Activated B cell treated with CpG ODN at 0.5 μM for 24 hours (primary cell): ENCODE measurements at regions of chr22 and their contacts with region 1.

Region 1: GRCh38 chr22:16917144-16918003 is 90.6 kb downstream of the GAB4 start:
- DNase-seq: peak; percentile 49
- ATAC-seq: peak; percentile 42
- H3K4me3 Mint-ChIP-seq: no peak overlapping the region
- H3K27ac Mint-ChIP-seq: no peak overlapping the region
- H3K4me1 Mint-ChIP-seq: peaks cover 28% of the 10 kb centered on the region
- H3K27me3 Mint-ChIP-seq: peaks cover 17% of the 10 kb centered on the region
- CTCF ChIP-seq: no peak

Region 2: DNA sequence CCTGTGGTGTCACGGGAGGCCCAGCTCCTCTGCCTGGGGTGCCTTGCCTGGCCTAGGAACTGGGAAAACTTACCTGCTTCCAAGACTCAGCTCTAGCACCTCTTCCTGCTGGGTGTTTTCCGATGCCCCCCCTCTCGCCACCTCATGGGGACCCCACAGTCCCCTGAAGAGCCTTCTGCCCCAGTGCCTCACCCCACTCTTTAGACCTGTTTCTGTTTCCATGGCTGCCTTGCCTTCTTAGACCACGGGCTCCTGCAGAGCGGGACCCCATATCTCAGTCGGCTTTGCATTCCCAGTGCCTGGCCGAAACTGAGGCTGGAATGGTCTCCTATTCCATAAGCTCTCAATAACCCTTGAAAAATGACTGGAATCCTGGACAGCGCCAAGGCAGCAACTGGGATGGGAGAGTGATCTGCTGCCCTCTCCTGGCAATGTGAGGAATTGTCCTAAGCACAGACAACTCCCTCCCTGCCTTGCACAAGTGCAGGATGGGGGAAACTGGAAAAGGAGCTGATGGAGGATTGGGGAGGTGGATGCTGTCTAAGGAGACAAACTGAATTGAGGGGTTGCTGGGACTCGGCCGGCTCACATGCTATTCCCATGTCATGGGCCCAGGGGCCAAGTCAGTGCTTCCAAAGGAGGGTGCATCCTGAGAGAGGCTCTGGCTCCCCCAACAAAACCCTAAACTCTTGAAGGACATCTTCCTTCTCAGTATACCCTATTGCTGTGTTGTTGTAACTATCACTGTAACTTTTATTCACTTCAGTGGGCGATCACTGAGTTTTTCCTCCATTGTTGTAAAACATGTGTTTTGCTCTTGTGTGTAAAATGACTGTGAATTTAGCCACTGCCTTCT is 140.8 kb after region 1 on chr22:
- CTCF ChIA-PET with region 1: interaction called, 45 read pairs
- POLR2A ChIA-PET with region 1: no interaction called
- intact Hi-C with region 1: no loop called
- DNase-seq: no peak
- ATAC-seq: peak; percentile 71
- H3K4me3 Mint-ChIP-seq: no peak overlapping the region
- H3K27ac Mint-ChIP-seq: no peak overlapping the region
- H3K4me1 Mint-ChIP-seq: peaks cover 3% of the 10 kb centered on the region
- H3K27me3 Mint-ChIP-seq: no peaks in the 10 kb centered on the region
- CTCF ChIP-seq: peak; percentile 31